ENCODE measurements at regions of chr2 and their contacts with region 1.

Region 1: GRCh38 chr2:158481116-158481515 is 24.4 kb downstream of the PKP4 start:
- DNase-seq: no peak
- ATAC-seq: no peak
- H3K4me3 ChIP-seq: no peak overlapping the region
- H3K4me3 Mint-ChIP-seq: no peak overlapping the region
- H3K27ac ChIP-seq: no peak overlapping the region
- H3K27ac Mint-ChIP-seq: no peak overlapping the region
- H3K4me1 ChIP-seq: peaks cover 5% of the 10 kb centered on the region
- H3K4me1 Mint-ChIP-seq: peaks cover 26% of the 10 kb centered on the region
- H3K27me3 ChIP-seq: no peaks in the 10 kb centered on the region
- H3K27me3 Mint-ChIP-seq: no peaks in the 10 kb centered on the region
- CTCF ChIP-seq: no peak

Region 2: DNA sequence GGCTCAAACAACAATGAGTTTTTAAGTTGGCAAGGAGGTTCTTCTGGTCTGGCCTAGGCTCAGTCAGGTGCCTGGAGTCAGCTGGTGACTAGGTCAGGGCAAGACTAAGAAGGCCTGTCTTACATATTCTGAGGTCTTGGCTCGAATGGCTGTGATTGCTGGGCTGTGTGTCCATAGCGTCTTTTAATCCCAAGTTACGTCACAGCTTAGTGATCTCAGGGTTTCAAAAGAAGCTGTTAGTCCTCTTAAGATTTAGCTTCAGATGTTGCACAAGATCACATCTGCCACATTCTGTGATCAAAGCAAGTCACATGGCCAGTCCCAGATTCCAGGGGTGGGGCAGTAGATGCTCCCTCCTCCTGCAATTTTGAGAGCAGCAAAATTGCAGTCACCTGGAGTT is 37.0 kb after region 1 on chr2:
- CTCF ChIA-PET with region 1: no interaction called
- POLR2A ChIA-PET with region 1: no interaction called
- intact Hi-C with region 1: no loop called
- DNase-seq: no peak
- ATAC-seq: no peak
- H3K4me3 ChIP-seq: no peak overlapping the region
- H3K4me3 Mint-ChIP-seq: no peak overlapping the region
- H3K27ac ChIP-seq: no peak overlapping the region
- H3K27ac Mint-ChIP-seq: no peak overlapping the region
- H3K4me1 ChIP-seq: no peaks in the 10 kb centered on the region
- H3K4me1 Mint-ChIP-seq: no peaks in the 10 kb centered on the region
- H3K27me3 ChIP-seq: no peaks in the 10 kb centered on the region
- H3K27me3 Mint-ChIP-seq: no peaks in the 10 kb centered on the region
- CTCF ChIP-seq: no peak

Region 3: DNA sequence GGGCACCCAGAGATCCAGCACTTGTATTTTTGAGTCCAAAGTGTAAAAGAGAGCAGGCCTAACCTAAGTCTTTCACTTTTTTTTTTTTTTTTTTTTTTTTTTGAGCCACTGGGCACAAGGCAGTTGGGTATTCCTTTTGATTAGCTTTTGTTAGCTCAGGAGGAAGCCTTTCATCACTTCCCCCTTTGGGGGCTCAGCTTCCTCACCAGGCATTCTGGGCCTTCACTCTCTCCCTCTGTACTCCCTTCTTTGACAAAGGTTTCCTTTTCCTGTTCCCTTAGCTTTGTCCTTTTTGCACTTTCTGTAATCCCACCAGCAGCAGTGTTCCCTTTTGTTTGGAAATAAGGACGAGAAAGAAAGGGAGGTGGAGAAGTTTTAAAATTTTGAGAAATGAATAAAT is 63.9 kb after region 1 on chr2:
- CTCF ChIA-PET with region 1: no interaction called
- POLR2A ChIA-PET with region 1: interaction called, 3 read pairs
- intact Hi-C with region 1: loop called in 1 of 2 experiments (anchors 2 kb)
- DNase-seq: no peak
- ATAC-seq: no peak
- H3K4me3 ChIP-seq: no peak overlapping the region
- H3K4me3 Mint-ChIP-seq: no peak overlapping the region
- H3K27ac ChIP-seq: no peak overlapping the region
- H3K27ac Mint-ChIP-seq: no peak overlapping the region
- H3K4me1 ChIP-seq: no peaks in the 10 kb centered on the region
- H3K4me1 Mint-ChIP-seq: peaks cover 8% of the 10 kb centered on the region
- H3K27me3 ChIP-seq: no peaks in the 10 kb centered on the region
- H3K27me3 Mint-ChIP-seq: no peaks in the 10 kb centered on the region
- CTCF ChIP-seq: no peak